ENCODE measurements at regions of chr14 and their contacts with region 1.

Region 1: DNA sequence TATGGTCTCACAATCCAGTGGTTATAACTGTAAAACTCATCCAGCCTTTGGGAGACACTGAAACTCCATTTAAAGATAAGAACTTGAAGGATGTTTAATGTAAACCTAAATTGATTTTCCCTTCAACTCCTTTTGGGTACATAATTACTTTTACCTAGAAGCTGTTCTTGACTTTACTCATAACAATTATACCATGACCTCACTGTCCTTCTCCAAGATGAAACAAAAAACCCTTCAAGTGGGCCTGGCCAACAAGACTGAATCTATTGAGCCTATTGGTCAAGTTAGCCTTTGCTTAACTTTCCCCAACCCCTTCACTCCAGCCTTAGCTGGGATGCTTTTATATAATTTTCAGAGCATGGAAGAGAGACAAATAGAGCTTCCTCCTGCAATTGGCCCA is 22.5 kb downstream of the PARP2 start:
- DNase-seq: no peak
- H3K4me3 Mint-ChIP-seq: no peak overlapping the region
- H3K27ac Mint-ChIP-seq: peak overlapping the region; percentile 15
- H3K4me1 Mint-ChIP-seq: peaks cover 10% of the 10 kb centered on the region
- H3K27me3 Mint-ChIP-seq: no peaks in the 10 kb centered on the region

Region 2: GRCh38 chr14:20400965-20401593 is 35.2 kb after region 1 on chr14:
- intact Hi-C with region 1: loop called (anchors 1 kb)
- DNase-seq: no peak
- H3K4me3 Mint-ChIP-seq: peak overlapping the region; percentile 53
- H3K27ac Mint-ChIP-seq: peak overlapping the region; percentile 86
- H3K4me1 Mint-ChIP-seq: peaks cover 30% of the 10 kb centered on the region
- H3K27me3 Mint-ChIP-seq: no peaks in the 10 kb centered on the region

Measured in activated T-helper 1 cell treated with anti-CD3 and anti-CD28 coated beads, Interleukin-12 subunit alpha, Interleukin-12 subunit beta, Interleukin-2, Interleukin-4 antibody, amounts not matched to agents 30 ng/mL and 10 ng/mL and 1 ng/mL, durations not matched to agents 14 hours and 24 hours and 36 hours (primary cell).